Common myeloid progenitor, CD34-positive (primary cell): ENCODE measurements at regions of chr11 and their contacts with region 1.

Region 1: DNA sequence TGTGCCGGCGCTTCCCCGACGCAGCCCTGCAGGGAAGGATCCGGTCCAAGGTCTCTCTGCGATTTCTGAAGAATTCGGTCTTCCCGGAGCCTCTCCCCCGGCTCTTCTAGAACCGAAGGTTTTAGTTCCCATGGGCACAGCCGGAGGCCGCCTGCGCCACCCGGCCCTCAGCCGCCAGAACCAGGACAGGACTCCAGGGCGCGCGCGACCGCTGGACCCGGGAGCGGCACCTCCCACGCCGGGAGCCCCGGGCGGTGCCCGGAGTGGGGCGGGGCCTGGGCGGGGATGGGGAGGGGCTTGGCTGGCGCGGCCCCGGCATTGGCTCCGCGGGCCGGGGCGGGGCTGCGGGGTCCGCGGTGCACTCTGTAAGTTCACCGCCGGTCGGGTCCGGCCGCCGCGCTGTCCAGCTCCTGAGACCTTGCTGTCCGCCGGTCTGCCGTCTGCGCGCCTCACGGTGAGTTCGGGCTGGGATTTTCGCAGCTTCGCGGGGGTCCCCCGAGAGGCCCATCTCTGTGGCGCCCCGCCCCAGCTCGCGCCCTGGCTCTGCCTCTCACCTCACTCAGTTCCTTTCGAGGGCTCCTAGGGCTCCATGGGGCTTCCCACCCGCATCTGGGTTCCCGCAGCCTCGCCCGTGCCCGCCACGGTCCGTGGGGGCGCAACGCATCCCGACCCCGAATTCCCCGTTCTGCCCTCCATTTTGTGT is at the start of gene CDC42EP2:
- DNase-seq: peak; percentile 45 to 48 (median 47)
- H3K4me3 ChIP-seq: peak within 1 kb of the TSS; percentile 56 to 84 (median 81)
- H3K27ac ChIP-seq: peak within 1 kb of the TSS in 1 of 2 experiments; percentile 25
- H3K4me1 ChIP-seq: peaks cover 0 to 22% (median 12%) of the 10 kb centered on the region in 4 experiments
- H3K27me3 ChIP-seq: peaks cover 0 to 11% (median 0%) of the 10 kb centered on the region in 5 experiments

Region 2: GRCh38 chr11:65262381-65262680 is 52.3 kb before region 1 on chr11:
- CTCF ChIA-PET with region 1: interaction called, 284 read pairs
- POLR2A ChIA-PET with region 1: no interaction called
- DNase-seq: peak in 1 of 3 donors; percentile 64
- H3K4me3 ChIP-seq: peak overlapping the region; percentile 59 to 92 (median 88)
- H3K27ac ChIP-seq: peak overlapping the region; percentile 64 to 87
- H3K4me1 ChIP-seq: peaks cover 15 to 35% (median 27%) of the 10 kb centered on the region in 4 experiments
- H3K27me3 ChIP-seq: no peaks in the 10 kb centered on the region

Region 3: DNA sequence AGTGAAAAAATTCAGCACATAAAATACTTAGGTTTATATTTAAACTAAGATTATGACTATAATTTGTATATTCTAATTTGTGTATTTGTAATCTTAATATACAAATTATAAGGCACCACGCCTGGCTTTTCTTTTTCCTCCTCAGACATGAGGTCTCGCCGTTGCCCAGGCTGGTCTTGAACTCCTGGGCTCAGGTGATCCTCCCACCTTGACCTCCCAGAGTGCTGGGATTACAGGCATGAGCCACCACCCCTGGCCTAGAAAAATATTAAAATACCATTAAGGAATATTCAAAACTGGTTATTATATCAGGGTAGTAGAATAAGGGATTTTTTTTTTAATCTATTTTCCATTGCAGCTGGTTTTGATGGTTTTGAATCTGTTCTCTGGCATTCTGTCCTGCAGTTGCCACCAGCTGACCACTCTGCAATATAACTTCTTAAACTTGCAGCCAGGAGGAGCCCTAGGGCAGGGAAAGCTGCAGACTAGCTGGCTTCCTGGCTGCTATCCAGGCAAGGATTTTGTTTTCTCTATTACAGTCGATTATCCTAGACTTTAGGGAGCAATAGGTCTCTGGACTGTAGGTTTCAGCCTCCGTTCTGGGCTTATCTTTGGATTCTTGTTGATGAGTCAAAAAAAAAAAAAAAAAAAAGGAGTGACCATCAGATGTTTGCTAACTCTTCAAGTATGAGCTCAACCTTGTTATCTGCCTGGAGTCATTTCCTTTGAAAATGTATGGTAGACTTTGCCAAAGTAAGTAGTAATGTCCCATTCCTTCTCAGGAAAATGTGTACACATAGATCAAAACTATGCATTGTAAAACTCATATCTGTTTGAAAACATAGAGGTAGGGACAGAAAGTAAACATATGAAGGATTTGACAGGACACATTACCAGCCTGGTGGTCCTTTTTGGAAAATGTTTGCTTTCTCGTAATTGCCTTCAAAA is 39.6 kb before region 1 on chr11:
- CTCF ChIA-PET with region 1: interaction called, 284 read pairs
- POLR2A ChIA-PET with region 1: interaction called, 7 read pairs
- DNase-seq: peak; percentile 68 to 86 (median 76)
- H3K4me3 ChIP-seq: no peak overlapping the region
- H3K27ac ChIP-seq: no peak overlapping the region
- H3K4me1 ChIP-seq: no peaks in the 10 kb centered on the region
- H3K27me3 ChIP-seq: no peaks in the 10 kb centered on the region

Region 4: GRCh38 chr11:65290448-65291165 is 24.0 kb before region 1 on chr11:
- CTCF ChIA-PET with region 1: interaction called, 20 read pairs
- POLR2A ChIA-PET with region 1: interaction called, 3 read pairs
- DNase-seq: peak; percentile 65 to 83 (median 82)
- H3K4me3 ChIP-seq: peak overlapping the region in 1 of 7 experiments; percentile 26
- H3K27ac ChIP-seq: peak overlapping the region in 1 of 2 experiments; percentile 43
- H3K4me1 ChIP-seq: peaks cover 11 to 30% (median 21%) of the 10 kb centered on the region in 4 experiments
- H3K27me3 ChIP-seq: no peaks in the 10 kb centered on the region

Region 5: GRCh38 chr11:65301491-65302329 is 12.9 kb before region 1 on chr11:
- CTCF ChIA-PET with region 1: interaction called, 17 read pairs
- POLR2A ChIA-PET with region 1: interaction called, 3 read pairs
- DNase-seq: peak in 2 of 3 donors; percentile 34 to 41
- H3K4me3 ChIP-seq: peak overlapping the region in 2 of 7 experiments; percentile 32 to 48
- H3K27ac ChIP-seq: peak overlapping the region in 1 of 2 experiments; percentile 34
- H3K4me1 ChIP-seq: peaks cover 0 to 14% (median 10%) of the 10 kb centered on the region in 4 experiments
- H3K27me3 ChIP-seq: no peaks in the 10 kb centered on the region

Region 6: DNA sequence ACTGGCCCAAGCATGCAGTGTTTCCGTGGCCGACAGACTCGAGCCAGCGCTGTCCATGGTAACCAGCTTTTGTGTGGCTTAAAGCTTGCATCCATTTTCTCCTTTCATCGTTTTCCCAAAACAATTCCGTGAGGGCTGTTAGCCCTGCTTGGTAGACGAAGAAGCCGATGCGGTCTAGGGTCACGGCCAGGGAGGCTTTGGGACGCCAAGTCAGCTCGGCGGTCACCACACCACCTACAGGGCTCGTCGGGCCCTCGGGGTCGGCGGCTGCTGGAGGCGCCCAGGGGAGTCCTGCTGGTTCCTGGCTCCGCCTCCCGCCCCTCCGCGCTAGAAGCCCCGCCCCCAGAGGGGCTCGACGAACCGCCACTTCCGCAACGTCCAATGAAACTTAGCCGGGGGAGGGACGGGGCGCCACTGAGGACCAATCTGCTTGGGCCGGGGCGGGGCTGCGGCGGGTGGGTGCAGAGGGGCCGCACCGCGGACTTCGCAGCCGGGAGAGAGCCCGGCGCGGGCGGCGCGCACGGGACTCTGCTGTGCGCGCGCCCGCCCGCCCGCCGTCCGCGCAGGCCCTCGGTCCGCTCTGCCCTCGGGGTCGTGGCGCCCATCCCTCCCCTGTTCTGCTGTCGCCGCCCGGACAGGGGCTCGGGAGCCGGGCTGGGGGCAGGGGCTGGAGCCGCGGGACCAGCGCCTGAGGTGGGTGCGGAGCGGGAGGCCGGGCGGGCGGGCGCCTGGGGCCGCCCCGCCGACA is 39.8 kb after region 1 on chr11 and contains the start of gene TIGD3:
- CTCF ChIA-PET with region 1: interaction called, 18 read pairs
- POLR2A ChIA-PET with region 1: no interaction called
- DNase-seq: peak; percentile 95 to 98 (median 98)
- H3K4me3 ChIP-seq: peak within 1 kb of the TSS; percentile 62 to 84 (median 68)
- H3K27ac ChIP-seq: no peak within 1 kb of the TSS
- H3K4me1 ChIP-seq: peaks cover 0 to 25% (median 23%) of the 10 kb centered on the region in 4 experiments
- H3K27me3 ChIP-seq: peaks cover 0 to 2% (median 0%) of the 10 kb centered on the region in 5 experiments